ENCODE measurements at regions of chr1 and their contacts with region 1.

Region 1: DNA sequence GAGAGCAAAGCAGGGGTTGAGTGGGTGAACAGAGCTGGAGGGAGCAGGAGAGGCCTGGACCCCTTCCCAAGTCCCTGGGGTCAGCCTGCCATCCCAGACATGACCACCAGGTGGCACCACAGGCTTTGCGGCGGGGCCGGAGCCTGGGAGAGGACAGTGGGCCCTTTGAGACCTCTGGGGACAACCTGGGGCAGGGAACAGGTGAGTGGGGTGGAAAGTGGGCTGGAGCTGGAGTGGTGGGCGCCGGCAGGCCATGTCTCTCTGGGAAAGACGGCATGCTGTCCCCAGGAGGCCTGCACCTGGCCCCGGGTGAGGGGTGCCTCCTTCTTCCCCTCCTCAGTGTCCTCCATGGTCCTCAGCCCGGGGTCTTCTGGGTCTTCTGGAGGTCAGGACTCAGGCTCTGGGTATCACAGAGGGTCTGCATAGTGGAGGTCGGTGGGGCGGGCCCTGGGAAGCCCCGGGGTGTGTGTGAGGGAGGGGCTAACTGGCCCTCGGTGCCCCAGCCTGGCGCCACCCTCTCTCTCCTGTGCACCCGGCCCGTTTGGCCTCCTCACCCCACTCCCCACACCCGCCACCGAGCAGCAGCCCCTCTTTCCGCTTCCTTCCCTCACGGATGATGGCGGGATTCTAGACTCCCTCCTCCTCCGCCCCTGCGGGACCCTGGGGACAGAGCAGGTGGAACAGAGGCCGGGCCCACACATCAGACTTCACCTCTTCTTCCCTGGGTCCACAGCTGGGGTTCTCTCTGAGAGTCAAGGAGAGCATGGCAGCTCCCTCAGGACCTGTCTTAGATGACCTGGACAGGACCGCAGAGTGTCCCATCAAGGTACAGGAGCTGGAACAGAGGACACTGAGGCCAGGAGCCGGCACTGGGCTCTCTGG is 28.4 kb upstream of the PKP1 start:
- DNase-seq: peak; percentile 88
- H3K4me3 ChIP-seq: no peak overlapping the region
- H3K27ac ChIP-seq: no peak overlapping the region
- H3K4me1 ChIP-seq: peaks cover 0 to 11% (median 0%) of the 10 kb centered on the region in 6 donors
- H3K27me3 ChIP-seq: peaks cover 0 to 34% (median 5%) of the 10 kb centered on the region in 7 donors
- CTCF ChIP-seq: peak; percentile 72 to 94 (median 89)
- POLR2A ChIP-seq: no peak

Region 2: GRCh38 chr1:200290010-200290685 is 964.7 kb before region 1 on chr1:
- intact Hi-C with region 1: no loop called
- DNase-seq: no peak
- H3K4me3 ChIP-seq: no peak overlapping the region
- H3K27ac ChIP-seq: no peak overlapping the region
- H3K4me1 ChIP-seq: peaks cover 0 to 15% (median 0%) of the 10 kb centered on the region in 6 donors
- H3K27me3 ChIP-seq: no peaks in the 10 kb centered on the region
- CTCF ChIP-seq: no peak
- POLR2A ChIP-seq: no peak

Region 3: DNA sequence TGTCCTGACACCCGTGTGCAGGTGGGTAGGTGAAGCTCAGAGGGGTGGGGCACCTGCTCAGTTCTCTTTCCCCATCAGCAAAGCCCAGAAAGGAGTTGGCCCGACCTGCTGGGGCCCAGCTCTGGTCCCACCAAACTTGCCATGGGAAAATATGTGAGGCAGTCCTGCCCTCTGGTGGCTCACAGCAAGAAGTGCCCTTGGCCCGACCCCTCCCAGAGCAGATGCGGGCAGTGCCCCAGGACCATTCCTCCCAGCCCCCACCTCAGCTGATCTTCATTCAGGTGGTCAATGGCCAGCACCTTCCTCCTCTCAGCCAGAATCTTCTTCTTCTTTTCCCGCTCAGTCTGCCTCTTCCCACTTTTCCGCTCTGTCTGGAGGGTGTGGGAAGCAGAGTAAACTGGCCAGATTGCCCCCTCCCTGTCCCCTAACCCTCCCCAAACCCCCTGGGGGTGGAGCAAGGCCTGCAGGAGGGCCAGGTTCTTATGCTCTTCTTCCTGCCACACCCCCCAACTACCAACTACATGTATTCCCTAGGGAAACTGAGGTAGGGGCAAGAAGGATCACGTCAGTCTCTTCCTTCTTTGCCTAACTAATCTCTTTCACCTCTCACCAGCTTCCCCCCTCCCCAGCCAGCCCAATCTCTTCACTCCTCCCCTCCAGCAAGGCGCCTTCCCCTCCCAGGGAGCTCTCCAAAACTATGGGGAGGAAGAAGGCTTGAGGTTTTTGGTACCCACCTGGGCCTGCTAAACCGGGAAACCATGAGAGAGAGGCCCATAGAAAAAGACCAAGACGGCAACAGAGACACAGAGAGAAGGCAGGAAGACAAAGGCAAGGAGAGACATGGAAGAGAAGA is 107.0 kb after region 1 on chr1:
- intact Hi-C with region 1: loop called (anchors 5 kb)
- DNase-seq: peak; percentile 72
- H3K4me3 ChIP-seq: no peak overlapping the region
- H3K27ac ChIP-seq: no peak overlapping the region
- H3K4me1 ChIP-seq: no peaks in the 10 kb centered on the region
- H3K27me3 ChIP-seq: peaks cover 0 to 35% (median 0%) of the 10 kb centered on the region in 7 donors
- CTCF ChIP-seq: peak in 10 of 11 experiments; percentile 14 to 75 (median 62)
- POLR2A ChIP-seq: no peak

Measured in spleen (tissue), 13 donors.